ENCODE measurements at regions of chr9 and their contacts with region 1.

Region 1: GRCh38 chr9:112921549-112921948 is 30.9 kb upstream of the SLC46A2 start:
- DNase-seq: peak; percentile 53
- H3K4me3 Mint-ChIP-seq: no peak overlapping the region
- H3K27ac Mint-ChIP-seq: no peak overlapping the region
- H3K4me1 Mint-ChIP-seq: no peaks in the 10 kb centered on the region
- H3K27me3 Mint-ChIP-seq: no peaks in the 10 kb centered on the region
- CTCF ChIP-seq: peak; percentile 50

Region 2: DNA sequence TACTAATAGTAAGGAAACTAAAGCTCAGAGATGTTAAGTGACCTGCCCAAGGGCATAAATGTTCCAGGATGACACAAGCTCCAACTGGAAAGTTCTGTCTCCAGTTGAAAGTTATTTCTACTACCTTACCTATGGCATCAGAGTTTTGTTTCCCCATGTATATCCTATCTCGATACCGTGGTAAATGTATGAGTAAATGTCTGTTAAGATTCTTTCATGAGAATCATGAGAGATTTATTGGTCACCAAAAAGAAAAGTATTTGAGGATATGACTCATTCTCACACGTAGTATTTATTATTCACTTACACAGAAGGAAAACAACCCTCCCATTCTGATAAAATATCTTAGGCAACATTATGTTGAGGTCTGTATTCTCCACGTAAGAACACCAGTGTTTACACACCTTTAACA is 1115.7 kb before region 1 on chr9:
- CTCF ChIA-PET with region 1: no interaction called
- POLR2A ChIA-PET with region 1: no interaction called
- intact Hi-C with region 1: no loop called
- DNase-seq: peak; percentile 79
- H3K4me3 Mint-ChIP-seq: peak overlapping the region; percentile 38
- H3K27ac Mint-ChIP-seq: peak overlapping the region; percentile 99
- H3K4me1 Mint-ChIP-seq: peaks cover 22% of the 10 kb centered on the region
- H3K27me3 Mint-ChIP-seq: no peaks in the 10 kb centered on the region
- CTCF ChIP-seq: no peak

Region 3: DNA sequence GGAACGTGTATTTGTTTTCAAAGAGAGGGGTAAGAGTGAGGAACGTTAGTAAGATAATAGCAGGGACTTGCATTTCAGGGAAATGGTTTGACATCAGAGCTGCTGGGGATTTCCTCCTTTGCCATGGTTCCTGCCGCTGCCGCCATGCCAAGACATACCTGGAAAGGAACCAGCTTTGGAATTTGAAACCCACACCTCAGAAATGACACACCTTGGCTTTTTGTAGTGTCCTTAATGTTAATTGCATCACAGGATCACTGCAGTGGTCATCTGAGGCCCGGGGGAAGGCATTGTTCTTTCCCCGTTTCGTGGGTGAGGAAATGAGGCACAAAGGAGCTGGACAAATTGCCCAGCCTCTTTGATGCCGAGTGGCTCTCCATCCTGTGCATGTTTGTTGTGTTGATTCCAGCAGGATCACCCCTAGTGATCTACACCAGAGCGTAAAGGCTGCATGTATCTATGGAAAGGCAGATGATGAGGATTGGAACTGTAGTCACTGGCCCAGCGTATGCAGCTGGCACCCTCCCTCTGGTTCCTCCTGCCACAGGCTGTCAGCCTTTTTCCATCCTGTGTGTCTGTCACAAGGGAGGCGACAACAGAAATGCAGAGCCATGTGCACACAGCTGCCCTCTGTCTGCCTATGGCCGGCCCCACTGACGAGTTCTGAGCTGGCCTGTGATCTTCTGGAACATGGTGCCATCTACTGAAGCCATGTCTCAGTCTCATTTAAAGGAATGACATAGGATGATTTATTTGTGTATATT is 68.6 kb before region 1 on chr9:
- CTCF ChIA-PET with region 1: no interaction called
- POLR2A ChIA-PET with region 1: no interaction called
- intact Hi-C with region 1: no loop called
- DNase-seq: peak; percentile 58
- H3K4me3 Mint-ChIP-seq: no peak overlapping the region
- H3K27ac Mint-ChIP-seq: no peak overlapping the region
- H3K4me1 Mint-ChIP-seq: no peaks in the 10 kb centered on the region
- H3K27me3 Mint-ChIP-seq: no peaks in the 10 kb centered on the region
- CTCF ChIP-seq: no peak

Region 4: GRCh38 chr9:112939418-112939817 is 17.9 kb after region 1 on chr9:
- CTCF ChIA-PET with region 1: interaction called, 27 read pairs
- POLR2A ChIA-PET with region 1: no interaction called
- intact Hi-C with region 1: no loop called
- DNase-seq: peak; percentile 46
- H3K4me3 Mint-ChIP-seq: no peak overlapping the region
- H3K27ac Mint-ChIP-seq: no peak overlapping the region
- H3K4me1 Mint-ChIP-seq: no peaks in the 10 kb centered on the region
- H3K27me3 Mint-ChIP-seq: peaks cover 19% of the 10 kb centered on the region
- CTCF ChIP-seq: no peak

Region 5: DNA sequence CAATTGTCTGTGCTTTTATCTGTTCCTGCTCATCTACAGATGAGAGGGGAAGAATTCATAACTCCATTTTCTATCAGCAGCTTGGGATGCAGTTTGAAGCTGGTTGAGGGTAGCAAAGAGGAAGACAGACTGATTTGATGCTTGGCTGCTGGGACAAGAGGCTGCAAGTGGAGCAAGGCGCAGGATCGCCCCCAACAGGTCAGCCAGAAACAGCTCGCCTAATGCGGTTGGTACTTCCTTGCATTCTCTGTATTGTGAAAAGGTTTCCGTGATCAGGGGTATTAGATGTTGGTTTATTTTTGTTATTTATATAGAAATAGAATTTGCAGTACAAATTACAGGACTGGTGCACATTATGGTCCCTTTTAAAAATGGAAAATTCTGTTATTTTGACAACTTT is 49.9 kb after region 1 on chr9:
- CTCF ChIA-PET with region 1: interaction called, 13 read pairs
- POLR2A ChIA-PET with region 1: no interaction called
- intact Hi-C with region 1: loop called (anchors 1 kb)
- DNase-seq: peak; percentile 34
- H3K4me3 Mint-ChIP-seq: no peak overlapping the region
- H3K27ac Mint-ChIP-seq: no peak overlapping the region
- H3K4me1 Mint-ChIP-seq: no peaks in the 10 kb centered on the region
- H3K27me3 Mint-ChIP-seq: peaks cover 19% of the 10 kb centered on the region
- CTCF ChIP-seq: peak; percentile 26

Region 6: DNA sequence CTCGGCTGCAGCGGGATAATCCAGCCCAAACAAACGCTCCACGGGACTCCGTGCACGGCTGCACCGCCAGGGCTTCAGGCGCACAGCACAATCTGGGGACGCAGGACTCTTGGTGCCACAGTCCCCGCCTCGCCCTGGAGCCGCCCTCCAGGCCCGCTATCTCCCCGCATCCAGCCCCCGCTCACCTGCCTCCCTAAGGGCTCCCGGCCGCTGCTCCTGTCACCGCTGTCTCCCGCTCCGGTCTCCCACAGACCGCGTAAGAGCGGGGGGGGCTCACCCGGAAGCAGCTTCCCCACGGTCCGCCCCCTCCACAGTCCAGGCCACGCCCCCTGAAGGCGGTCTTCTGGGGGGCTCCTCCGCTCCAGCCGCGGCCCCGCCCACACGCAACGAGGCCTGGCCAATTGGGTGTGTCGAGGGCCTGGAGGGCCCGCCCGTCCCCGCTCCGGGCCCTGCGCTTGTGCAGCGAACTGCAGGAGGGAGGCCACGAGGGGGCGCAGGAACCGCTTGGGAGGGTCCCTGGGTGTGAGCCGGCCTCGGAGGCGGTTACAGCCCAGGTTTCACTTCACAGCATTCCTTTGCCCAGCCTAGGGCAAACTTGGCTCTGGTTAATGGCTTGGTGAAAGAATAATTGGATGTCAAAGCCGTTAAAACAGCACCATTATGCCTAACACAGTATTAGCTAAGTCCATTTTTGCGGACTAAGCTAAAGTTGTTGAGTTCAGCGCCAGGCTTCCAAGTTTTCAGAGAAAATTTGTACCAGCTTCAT is 479.7 kb after region 1 on chr9 and contains the start of gene ALAD:
- CTCF ChIA-PET with region 1: no interaction called
- POLR2A ChIA-PET with region 1: no interaction called
- intact Hi-C with region 1: loop called (anchors 10 kb)
- DNase-seq: peak; percentile 98
- H3K4me3 Mint-ChIP-seq: peak within 1 kb of the TSS; percentile 97
- H3K27ac Mint-ChIP-seq: peak within 1 kb of the TSS; percentile 82
- H3K4me1 Mint-ChIP-seq: peaks cover 12% of the 10 kb centered on the region
- H3K27me3 Mint-ChIP-seq: no peaks in the 10 kb centered on the region
- CTCF ChIP-seq: peak; percentile 86
- total RNA-seq, gene ALAD: 6.6 and 7.8 TPM in 2 replicates

Region 7: GRCh38 chr9:113828221-113828620 is 906.7 kb after region 1 on chr9:
- CTCF ChIA-PET with region 1: no interaction called
- POLR2A ChIA-PET with region 1: no interaction called
- intact Hi-C with region 1: no loop called
- DNase-seq: peak; percentile 11
- H3K4me3 Mint-ChIP-seq: no peak overlapping the region
- H3K27ac Mint-ChIP-seq: peak overlapping the region; percentile 37
- H3K4me1 Mint-ChIP-seq: peaks cover 8% of the 10 kb centered on the region
- H3K27me3 Mint-ChIP-seq: peaks cover under 1% of the 10 kb centered on the region
- CTCF ChIP-seq: no peak

Measured in MCF 10A (cell line).